H1 (cell line): ENCODE measurements at regions of chr1 and their contacts with region 1.

Region 1: GRCh38 chr1:9629445-9630201 is 21.9 kb upstream of the PIK3CD start:
- DNase-seq: peak in 1 of 2 experiments; percentile 49
- H3K4me3 ChIP-seq: no peak overlapping the region
- H3K27ac ChIP-seq: no peak overlapping the region
- H3K4me1 ChIP-seq: peaks cover 0 to 10% (median 8%) of the 10 kb centered on the region in 4 experiments; a peak in 5 of 7 replicates
- H3K27me3 ChIP-seq: peaks cover 0 to 8% (median 0%) of the 10 kb centered on the region in 4 experiments; a peak in 2 of 7 replicates
- CTCF ChIP-seq: no peak
- EP300 ChIP-seq: no peak
- POLR2A ChIP-seq: no peak
- RAD21 ChIP-seq: no peak

Region 2: DNA sequence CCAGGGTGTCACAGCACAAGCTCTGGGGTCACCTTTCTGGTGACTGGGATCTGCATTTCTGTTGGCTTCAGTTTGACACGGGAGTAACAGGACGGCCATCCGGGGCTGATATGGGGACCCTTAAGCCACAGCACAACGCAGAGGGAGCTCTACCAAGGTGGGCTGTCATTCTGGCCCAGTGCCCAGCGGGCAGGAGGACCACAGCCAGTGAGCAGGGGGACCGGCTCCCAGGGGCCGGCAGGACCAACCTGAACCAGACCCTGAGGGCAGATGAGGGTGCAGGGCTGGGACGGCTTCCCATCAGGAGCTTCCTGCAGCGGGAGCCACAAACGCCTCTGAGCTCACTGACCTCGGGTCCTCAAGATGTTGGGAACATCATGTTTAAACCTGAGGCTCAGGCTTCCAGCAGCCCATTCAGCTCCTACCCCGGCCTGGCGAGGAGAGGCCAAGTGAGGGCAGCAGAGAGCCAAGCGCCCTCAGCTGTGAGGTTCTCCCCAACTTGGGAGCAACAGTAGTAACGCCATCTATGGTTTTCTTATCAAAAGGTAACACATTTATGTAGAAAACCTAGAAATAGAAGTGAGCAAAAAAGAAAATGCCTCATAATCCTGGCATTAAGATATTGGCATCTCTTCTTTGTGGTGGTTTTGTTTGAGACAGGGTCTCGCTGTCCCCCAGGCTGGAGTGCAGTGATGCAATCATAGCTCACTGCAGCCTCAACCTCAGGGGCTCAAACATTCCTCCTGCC is 14.1 kb before region 1 on chr1:
- CTCF ChIA-PET with region 1: interaction called, 77 read pairs
- POLR2A ChIA-PET with region 1: interaction called, 6 read pairs
- DNase-seq: peak; percentile 59 to 86
- H3K4me3 ChIP-seq: no peak overlapping the region
- H3K27ac ChIP-seq: no peak overlapping the region
- H3K4me1 ChIP-seq: no peaks in the 10 kb centered on the region; a peak in 1 of 7 replicates
- H3K27me3 ChIP-seq: no peaks in the 10 kb centered on the region
- CTCF ChIP-seq: peak; percentile 94 to 96 (median 95)
- EP300 ChIP-seq: no peak
- POLR2A ChIP-seq: no peak
- RAD21 ChIP-seq: peak; percentile 68 to 72

Region 3: DNA sequence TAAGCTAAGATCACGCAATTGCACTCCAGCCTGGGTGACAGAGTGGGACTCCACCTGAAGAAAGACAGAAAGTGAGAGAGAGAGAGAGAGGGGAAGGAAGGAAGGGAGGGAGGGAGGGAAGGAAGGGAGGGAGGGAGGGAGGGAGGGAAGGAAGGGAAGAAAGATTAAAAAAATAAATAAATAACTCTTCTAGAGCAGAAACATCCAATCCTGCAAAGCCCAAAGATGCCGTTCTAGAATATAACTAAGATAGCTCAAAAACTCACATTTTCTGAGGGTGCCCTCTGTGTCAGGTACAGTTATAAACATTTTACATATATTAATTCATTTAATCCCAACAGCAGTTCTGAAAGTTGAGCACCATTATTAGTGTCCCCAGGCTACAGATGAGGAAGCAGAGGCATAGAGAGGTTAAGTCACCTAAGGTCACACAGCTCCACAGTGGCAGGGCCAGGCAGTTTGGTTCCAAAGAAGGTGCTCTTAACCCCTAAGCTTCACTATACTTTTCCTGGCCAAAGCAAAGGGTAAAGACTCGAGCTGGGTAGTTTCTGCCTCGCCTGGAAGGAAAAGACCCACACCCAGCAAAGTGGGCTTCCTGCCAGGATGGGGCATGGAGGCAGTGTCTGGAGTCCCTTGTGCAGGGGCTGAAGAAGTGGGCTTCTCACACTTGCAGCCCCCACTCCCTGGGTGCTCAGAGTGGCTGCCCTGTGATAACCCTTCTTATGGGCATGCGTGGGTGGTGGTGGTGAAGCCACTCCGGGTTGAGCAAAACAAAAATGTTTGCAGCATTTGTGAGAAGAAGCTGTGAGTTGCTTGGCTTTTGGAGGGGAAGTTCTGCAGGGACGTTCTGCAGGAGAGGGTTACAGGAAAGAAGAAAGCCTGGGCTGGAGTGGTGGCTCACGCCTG is 14.0 kb after region 1 on chr1:
- CTCF ChIA-PET with region 1: interaction called, 11 read pairs
- POLR2A ChIA-PET with region 1: interaction called, 3 read pairs
- DNase-seq: no peak
- H3K4me3 ChIP-seq: no peak overlapping the region
- H3K27ac ChIP-seq: no peak overlapping the region
- H3K4me1 ChIP-seq: no peaks in the 10 kb centered on the region
- H3K27me3 ChIP-seq: no peaks in the 10 kb centered on the region
- CTCF ChIP-seq: no peak
- EP300 ChIP-seq: no peak
- POLR2A ChIP-seq: no peak
- RAD21 ChIP-seq: no peak

Region 4: GRCh38 chr1:9651565-9652378 is 22.1 kb after region 1 on chr1 and contains the start of gene PIK3CD:
- CTCF ChIA-PET with region 1: interaction called, 15 read pairs
- POLR2A ChIA-PET with region 1: interaction called, 3 read pairs
- DNase-seq: peak in 1 of 2 experiments; percentile 76
- H3K4me3 ChIP-seq: peak within 1 kb of the TSS; percentile 52 to 71 (median 58)
- H3K27ac ChIP-seq: no peak within 1 kb of the TSS
- H3K4me1 ChIP-seq: peaks cover 0 to 3% (median 0%) of the 10 kb centered on the region in 4 experiments; a peak in 3 of 7 replicates
- H3K27me3 ChIP-seq: peaks cover 5 to 33% (median 29%) of the 10 kb centered on the region in 4 experiments
- CTCF ChIP-seq: no peak
- EP300 ChIP-seq: no peak
- POLR2A ChIP-seq: no peak
- RAD21 ChIP-seq: no peak
- total RNA-seq, gene PIK3CD: 24.1 and 24.8 TPM in 2 replicates

Region 5: GRCh38 chr1:9680828-9681227 is 51.2 kb after region 1 on chr1:
- CTCF ChIA-PET with region 1: interaction called, 11 read pairs
- POLR2A ChIA-PET with region 1: no interaction called
- DNase-seq: no peak
- H3K4me3 ChIP-seq: no peak overlapping the region
- H3K27ac ChIP-seq: no peak overlapping the region
- H3K4me1 ChIP-seq: peaks cover 0 to 2% (median 0%) of the 10 kb centered on the region in 4 experiments; a peak in 1 of 7 replicates
- H3K27me3 ChIP-seq: no peaks in the 10 kb centered on the region
- CTCF ChIP-seq: no peak
- EP300 ChIP-seq: no peak
- POLR2A ChIP-seq: no peak
- RAD21 ChIP-seq: no peak

Region 6: DNA sequence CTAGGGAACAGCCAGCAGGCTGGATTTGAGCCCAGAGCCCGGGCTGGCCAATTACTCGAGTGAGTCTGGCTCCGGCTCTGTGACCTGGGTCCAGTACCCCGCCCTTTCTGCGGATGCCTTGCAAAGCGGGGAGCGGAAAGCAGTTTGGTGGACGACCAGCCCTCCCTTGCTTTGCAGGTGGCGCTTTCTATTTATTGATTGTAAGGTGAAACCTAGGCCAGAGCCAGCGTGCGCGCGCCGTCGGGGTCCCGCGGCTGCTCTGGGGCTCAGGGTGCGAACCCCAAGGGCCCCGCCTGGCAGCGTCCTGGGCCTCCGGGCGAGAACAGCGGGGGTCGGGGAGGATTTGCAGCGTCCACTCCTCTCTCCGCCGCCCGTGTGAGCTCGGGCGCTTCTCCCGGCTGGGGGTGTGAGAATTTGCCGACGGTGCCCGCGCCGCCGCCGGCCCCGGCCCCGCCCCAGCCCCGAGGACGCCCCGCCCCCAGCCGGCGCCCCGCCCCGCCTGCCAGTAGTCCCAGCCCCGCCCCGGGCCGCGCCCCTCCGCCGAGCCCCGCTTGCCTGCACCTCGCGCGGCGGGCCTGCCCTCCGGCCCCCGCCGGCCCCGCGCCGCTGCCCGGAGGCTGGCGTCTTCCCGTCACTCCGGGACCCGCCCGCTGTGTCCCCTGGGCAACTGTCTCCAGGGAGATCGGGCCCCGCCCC is 59.5 kb after region 1 on chr1:
- CTCF ChIA-PET with region 1: interaction called, 12 read pairs
- POLR2A ChIA-PET with region 1: interaction called, 3 read pairs
- DNase-seq: peak in 1 of 2 experiments; percentile 96
- H3K4me3 ChIP-seq: peak overlapping the region; percentile 46 to 81 (median 59)
- H3K27ac ChIP-seq: peak overlapping the region; percentile 53; the same call in 1 of the 2 replicates
- H3K4me1 ChIP-seq: peaks cover 7 to 24% (median 15%) of the 10 kb centered on the region in 4 experiments
- H3K27me3 ChIP-seq: peaks cover 0 to 13% (median 11%) of the 10 kb centered on the region in 4 experiments; a peak in 6 of 7 replicates
- CTCF ChIP-seq: no peak
- EP300 ChIP-seq: no peak
- POLR2A ChIP-seq: no peak; a peak in 1 of 3 replicates
- RAD21 ChIP-seq: no peak

Region 7: DNA sequence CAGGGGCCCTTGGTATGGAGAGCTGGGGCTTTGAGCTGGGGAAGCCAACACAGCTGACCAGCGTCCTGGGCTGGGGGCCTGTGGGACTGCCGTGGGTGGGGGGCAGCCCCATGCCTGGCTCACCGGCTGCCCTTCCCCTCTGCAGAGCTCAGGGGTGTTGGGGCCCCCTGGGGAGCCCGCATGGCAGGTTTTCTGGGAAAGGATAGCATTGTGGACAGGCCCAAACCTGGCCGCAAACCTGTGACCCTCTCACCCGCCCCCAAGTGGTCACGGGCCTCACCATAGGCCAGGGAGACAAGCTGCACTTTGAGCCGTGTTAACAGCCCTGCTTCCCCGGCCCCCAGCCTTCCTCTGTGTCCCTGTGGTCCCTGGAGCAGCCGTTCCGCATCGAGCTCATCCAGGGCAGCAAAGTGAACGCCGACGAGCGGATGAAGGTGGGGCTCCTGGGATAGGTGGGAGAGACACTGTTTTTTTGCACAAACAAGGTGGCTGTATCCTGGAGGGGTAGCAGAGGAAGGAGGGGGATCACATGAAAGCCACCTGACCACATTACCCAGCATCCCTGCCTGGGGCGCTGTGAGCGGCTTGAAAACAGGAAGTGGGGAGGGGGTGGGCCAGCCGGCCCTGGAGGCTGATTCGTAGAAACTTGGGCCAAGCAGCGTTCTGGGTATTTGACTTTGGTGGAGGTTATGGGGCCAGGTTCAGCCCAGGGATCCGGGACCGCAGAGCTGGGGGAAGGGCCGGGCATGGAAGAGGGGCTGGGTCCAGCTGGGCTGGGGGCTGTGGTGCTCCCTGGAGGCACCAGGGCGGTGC is 87.8 kb after region 1 on chr1:
- CTCF ChIA-PET with region 1: interaction called, 39 read pairs
- POLR2A ChIA-PET with region 1: no interaction called
- DNase-seq: no peak
- H3K4me3 ChIP-seq: no peak overlapping the region
- H3K27ac ChIP-seq: peak overlapping the region; percentile 49; the same call in 1 of the 2 replicates
- H3K4me1 ChIP-seq: peaks cover 4 to 50% (median 35%) of the 10 kb centered on the region in 4 experiments
- H3K27me3 ChIP-seq: no peaks in the 10 kb centered on the region
- CTCF ChIP-seq: peak in 2 of 3 experiments; percentile 33 to 42; a peak in 1 of 4 replicates
- EP300 ChIP-seq: no peak
- POLR2A ChIP-seq: no peak
- RAD21 ChIP-seq: peak in 1 of 2 experiments; percentile 34; a peak in 1 of 4 replicates